ENCODE measurements at regions of chr1 and their contacts with region 1.

Region 1: DNA sequence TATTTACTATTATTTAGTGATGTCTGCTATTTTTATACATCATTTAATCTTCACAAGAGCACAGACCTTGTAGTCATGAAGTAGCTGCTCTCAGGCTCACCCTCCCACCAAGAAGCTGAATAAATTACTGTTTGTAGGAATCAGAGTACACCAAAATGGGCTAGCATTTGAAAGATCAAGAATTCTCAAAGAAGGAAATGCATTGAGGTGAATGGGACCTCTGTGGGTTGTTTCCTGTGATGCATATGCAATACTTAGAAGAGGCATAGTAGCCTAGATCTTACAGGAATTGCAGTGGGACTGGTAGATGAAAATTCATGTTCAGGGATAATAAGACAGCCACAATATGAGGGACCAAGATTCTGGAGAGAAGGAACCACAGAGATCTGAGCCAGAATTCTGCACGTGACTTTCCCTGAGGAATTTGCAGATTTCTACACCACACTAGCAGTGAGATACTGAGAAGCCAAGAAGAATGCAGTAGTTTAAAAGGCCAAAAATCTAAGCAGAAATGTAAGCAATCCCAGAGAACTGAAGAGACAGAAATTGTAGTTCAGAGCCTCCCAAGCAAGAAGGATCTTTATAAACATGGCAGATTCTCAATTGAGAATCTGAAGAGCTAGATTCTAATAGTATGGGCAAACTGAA is 307.0 kb downstream of the ST6GALNAC3 start:
- DNase-seq: no peak
- ATAC-seq: no peak
- H3K4me3 ChIP-seq: no peak overlapping the region
- H3K4me3 Mint-ChIP-seq: no peak overlapping the region
- H3K27ac ChIP-seq: no peak overlapping the region
- H3K27ac Mint-ChIP-seq: no peak overlapping the region
- H3K4me1 ChIP-seq: no peaks in the 10 kb centered on the region
- H3K4me1 Mint-ChIP-seq: no peaks in the 10 kb centered on the region
- H3K27me3 ChIP-seq: no peaks in the 10 kb centered on the region
- H3K27me3 Mint-ChIP-seq: peaks cover 0 to 3% (median 0%) of the 10 kb centered on the region in 5 donors

Region 2: GRCh38 chr1:75421371-75421770 is 960.2 kb before region 1 on chr1:
- CTCF ChIA-PET with region 1: no interaction called
- POLR2A ChIA-PET with region 1: no interaction called
- intact Hi-C with region 1: no loop called
- DNase-seq: no peak
- ATAC-seq: no peak
- H3K4me3 ChIP-seq: no peak overlapping the region
- H3K4me3 Mint-ChIP-seq: no peak overlapping the region
- H3K27ac ChIP-seq: no peak overlapping the region
- H3K27ac Mint-ChIP-seq: no peak overlapping the region
- H3K4me1 ChIP-seq: no peaks in the 10 kb centered on the region
- H3K4me1 Mint-ChIP-seq: no peaks in the 10 kb centered on the region
- H3K27me3 ChIP-seq: no peaks in the 10 kb centered on the region
- H3K27me3 Mint-ChIP-seq: peaks cover 0 to 4% (median 0%) of the 10 kb centered on the region in 5 donors

Region 3: GRCh38 chr1:76408303-76408702 is 26.7 kb after region 1 on chr1:
- CTCF ChIA-PET with region 1: no interaction called
- POLR2A ChIA-PET with region 1: no interaction called
- intact Hi-C with region 1: loop called in 1 of 2 experiments (anchors 2 kb)
- DNase-seq: no peak
- ATAC-seq: no peak
- H3K4me3 ChIP-seq: no peak overlapping the region
- H3K4me3 Mint-ChIP-seq: no peak overlapping the region
- H3K27ac ChIP-seq: no peak overlapping the region
- H3K27ac Mint-ChIP-seq: no peak overlapping the region
- H3K4me1 ChIP-seq: no peaks in the 10 kb centered on the region
- H3K4me1 Mint-ChIP-seq: no peaks in the 10 kb centered on the region
- H3K27me3 ChIP-seq: no peaks in the 10 kb centered on the region
- H3K27me3 Mint-ChIP-seq: peaks cover 0 to 4% (median 0%) of the 10 kb centered on the region in 5 donors

Measured in naive thymus-derived CD4-positive, alpha-beta T cell (primary cell).